Naive thymus-derived CD4-positive, alpha-beta T cell (primary cell): ENCODE measurements at regions of chr14 and their contacts with region 1.

Region 1: DNA sequence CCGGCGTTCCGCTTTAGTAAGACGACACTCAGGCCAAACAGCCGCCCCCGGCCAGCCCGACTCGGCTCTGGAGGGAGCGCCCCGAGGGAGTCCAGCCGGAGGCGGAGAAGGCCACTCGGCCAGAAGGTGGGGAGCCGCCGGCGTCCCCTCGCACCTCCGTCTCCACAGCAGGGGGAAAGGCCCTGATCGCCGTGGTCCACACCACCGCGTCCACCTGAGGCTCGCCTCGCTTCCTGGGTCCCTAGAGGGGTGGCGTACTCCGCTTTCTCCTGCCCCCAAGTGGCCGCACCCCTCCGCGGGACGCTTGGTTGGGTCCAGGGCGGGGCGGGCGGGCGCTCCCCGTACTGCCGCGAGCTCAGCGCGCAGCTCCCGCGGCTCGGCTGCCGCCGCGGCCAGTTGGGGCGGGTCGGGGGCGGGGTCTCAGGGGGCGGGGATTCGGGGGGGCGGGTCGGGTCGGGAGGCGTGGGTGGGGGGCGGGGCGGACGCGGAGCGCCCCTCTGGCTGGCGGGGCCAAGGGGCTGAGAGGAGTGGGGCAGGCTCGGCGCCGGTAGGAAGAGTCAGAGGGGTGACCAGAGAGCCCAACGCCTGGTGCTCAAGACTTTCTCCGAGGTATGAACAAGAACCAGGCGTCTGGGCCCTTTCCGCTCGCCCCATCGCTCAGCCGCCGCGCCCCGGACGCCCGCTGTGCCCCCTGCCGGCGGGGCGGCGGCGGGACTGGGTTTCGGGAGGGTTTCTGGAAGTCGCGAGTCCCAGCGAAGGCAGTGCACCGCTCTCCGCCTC is at the start of gene FRMD6:
- DNase-seq: peak; percentile 75 to 90 (median 83)
- ATAC-seq: peak; percentile 90
- H3K4me3 ChIP-seq: peak within 1 kb of the TSS; percentile 76
- H3K4me3 Mint-ChIP-seq: peak within 1 kb of the TSS; percentile 77 to 89 (median 84)
- H3K27ac ChIP-seq: peak within 1 kb of the TSS; percentile 78
- H3K27ac Mint-ChIP-seq: peak within 1 kb of the TSS in 8 of 9 donors; percentile 20 to 83 (median 73)
- H3K4me1 ChIP-seq: peaks cover 6 to 18% of the 10 kb centered on the region in 2 donors
- H3K4me1 Mint-ChIP-seq: peaks cover 12 to 29% (median 18%) of the 10 kb centered on the region in 7 donors
- H3K27me3 ChIP-seq: peaks cover 0 to 12% of the 10 kb centered on the region in 2 donors
- H3K27me3 Mint-ChIP-seq: peaks cover 9 to 31% (median 19%) of the 10 kb centered on the region in 5 donors
- total RNA-seq, gene FRMD6: 0.93 to 4.8 (median 3.9) TPM

Region 2: DNA sequence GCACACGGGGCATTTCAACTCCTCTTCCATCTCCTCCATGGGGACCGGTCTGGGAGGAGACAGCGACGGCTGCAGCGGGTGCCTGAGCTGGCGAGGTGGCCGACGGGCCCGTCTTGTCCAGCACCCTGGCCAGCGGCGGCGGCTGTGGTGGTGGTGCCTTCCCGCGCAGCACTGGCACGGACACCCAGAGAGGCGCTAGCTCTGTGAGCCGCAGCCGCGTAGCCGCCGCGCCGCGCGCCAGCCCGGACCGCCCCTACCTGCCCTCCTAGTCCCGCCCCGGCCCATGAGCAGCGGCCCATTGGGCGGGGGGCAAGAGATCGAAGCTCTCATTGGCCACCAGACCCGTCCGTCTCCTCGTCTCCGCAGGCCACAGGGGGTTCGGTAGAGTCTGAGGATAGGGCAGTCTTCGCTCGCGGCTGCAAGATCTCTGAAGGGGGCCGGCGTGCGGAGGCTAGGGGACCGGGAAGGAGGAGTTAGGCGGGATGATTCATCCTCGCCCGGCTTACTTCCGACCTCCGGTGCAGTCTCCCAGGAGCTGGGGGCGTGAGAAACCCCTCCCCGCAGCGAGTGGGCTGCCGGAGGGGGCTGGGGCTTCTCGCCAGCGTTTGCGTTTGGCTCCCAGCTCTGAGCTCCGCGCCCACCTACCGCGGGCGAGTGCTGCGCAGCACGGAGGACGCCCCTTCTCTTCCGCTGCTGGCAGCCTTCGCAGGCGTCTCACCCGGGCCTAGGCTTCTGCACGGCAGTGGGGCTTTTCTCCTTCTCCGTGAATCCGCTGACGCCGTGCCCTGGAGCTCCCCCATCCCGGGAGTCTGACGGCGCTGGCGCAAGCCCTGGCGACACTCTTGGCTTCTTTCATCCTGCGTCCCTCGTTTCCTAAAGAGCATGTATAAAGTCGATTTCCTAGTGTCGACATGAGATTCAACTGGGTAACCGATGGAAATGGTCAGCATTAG is 556.4 kb before region 1 on chr14 and contains the start of gene TRIM9:
- CTCF ChIA-PET with region 1: no interaction called
- POLR2A ChIA-PET with region 1: no interaction called
- intact Hi-C with region 1: loop called (anchors 1 kb)
- DNase-seq: peak; percentile 77 to 93 (median 91)
- ATAC-seq: peak; percentile 96
- H3K4me3 ChIP-seq: peak within 1 kb of the TSS; percentile 83
- H3K4me3 Mint-ChIP-seq: peak within 1 kb of the TSS; percentile 89 to 98 (median 95)
- H3K27ac ChIP-seq: peak within 1 kb of the TSS; percentile 58
- H3K27ac Mint-ChIP-seq: peak within 1 kb of the TSS; percentile 9 to 93 (median 87)
- H3K4me1 ChIP-seq: peaks cover 3 to 8% of the 10 kb centered on the region in 2 donors
- H3K4me1 Mint-ChIP-seq: peaks cover 4 to 18% (median 9%) of the 10 kb centered on the region in 7 donors
- H3K27me3 ChIP-seq: peaks cover 0 to 3% of the 10 kb centered on the region in 2 donors
- H3K27me3 Mint-ChIP-seq: peaks cover 12 to 70% (median 17%) of the 10 kb centered on the region in 5 donors
- total RNA-seq, gene TRIM9: 0.27 to 1.7 (median 0.39) TPM

Region 3: GRCh38 chr14:51369814-51370213 is 281.8 kb before region 1 on chr14:
- CTCF ChIA-PET with region 1: no interaction called
- POLR2A ChIA-PET with region 1: no interaction called
- intact Hi-C with region 1: loop called in 1 of 2 experiments (anchors 5 kb)
- DNase-seq: peak in 4 of 9 donors; percentile 1 to 14 (median 8)
- ATAC-seq: no peak
- H3K4me3 ChIP-seq: no peak overlapping the region
- H3K4me3 Mint-ChIP-seq: no peak overlapping the region
- H3K27ac ChIP-seq: no peak overlapping the region
- H3K27ac Mint-ChIP-seq: no peak overlapping the region
- H3K4me1 ChIP-seq: no peaks in the 10 kb centered on the region
- H3K4me1 Mint-ChIP-seq: no peaks in the 10 kb centered on the region
- H3K27me3 ChIP-seq: no peaks in the 10 kb centered on the region
- H3K27me3 Mint-ChIP-seq: peaks cover 4 to 14% (median 9%) of the 10 kb centered on the region in 5 donors

Region 4: GRCh38 chr14:51395361-51395849 is 256.2 kb before region 1 on chr14:
- CTCF ChIA-PET with region 1: no interaction called
- POLR2A ChIA-PET with region 1: no interaction called
- intact Hi-C with region 1: no loop called
- DNase-seq: no peak
- ATAC-seq: no peak
- H3K4me3 ChIP-seq: no peak overlapping the region
- H3K4me3 Mint-ChIP-seq: no peak overlapping the region
- H3K27ac ChIP-seq: no peak overlapping the region
- H3K27ac Mint-ChIP-seq: no peak overlapping the region
- H3K4me1 ChIP-seq: no peaks in the 10 kb centered on the region
- H3K4me1 Mint-ChIP-seq: no peaks in the 10 kb centered on the region
- H3K27me3 ChIP-seq: no peaks in the 10 kb centered on the region
- H3K27me3 Mint-ChIP-seq: peaks cover 9 to 24% (median 14%) of the 10 kb centered on the region in 5 donors

Region 5: DNA sequence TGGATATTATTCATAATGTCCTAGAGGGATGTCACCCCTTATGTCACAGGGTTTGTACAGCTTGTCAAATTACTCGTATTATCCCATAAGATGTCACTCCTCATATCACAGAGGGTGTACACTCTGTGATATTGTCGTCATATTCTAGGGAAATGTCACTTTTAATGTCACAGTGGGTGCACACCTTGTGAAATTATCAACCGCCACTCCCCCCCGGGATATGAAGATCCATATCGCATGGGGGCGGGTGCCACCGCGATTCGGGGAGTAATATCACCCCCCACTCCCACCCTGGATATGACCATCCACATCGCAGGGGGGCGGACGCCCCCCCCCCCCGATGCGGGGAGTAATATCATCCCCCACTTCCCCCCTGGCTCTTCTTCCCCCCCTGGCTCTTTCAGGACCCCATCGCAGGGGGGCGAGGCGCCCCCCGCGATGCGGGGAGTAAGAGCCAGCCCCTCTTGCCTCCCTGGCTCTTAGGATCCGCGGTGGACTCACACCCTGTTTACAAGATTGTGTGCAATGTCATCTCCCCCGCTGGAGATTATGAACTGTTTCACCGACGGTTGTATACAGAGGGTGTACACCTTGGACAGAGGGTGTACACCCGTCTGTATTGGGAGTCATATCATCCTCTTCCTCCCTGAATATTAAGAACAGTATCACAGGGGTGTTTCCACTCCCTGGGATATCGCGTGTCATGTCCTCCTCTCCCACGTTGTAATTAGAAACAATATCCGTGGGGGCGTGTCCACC is 93.0 kb after region 1 on chr14:
- CTCF ChIA-PET with region 1: no interaction called
- POLR2A ChIA-PET with region 1: no interaction called
- intact Hi-C with region 1: loop called in 1 of 2 experiments (anchors 5 kb)
- DNase-seq: no peak
- ATAC-seq: no peak
- H3K4me3 ChIP-seq: no peak overlapping the region
- H3K4me3 Mint-ChIP-seq: no peak overlapping the region
- H3K27ac ChIP-seq: no peak overlapping the region
- H3K27ac Mint-ChIP-seq: no peak overlapping the region
- H3K4me1 ChIP-seq: no peaks in the 10 kb centered on the region
- H3K4me1 Mint-ChIP-seq: peaks cover 0 to 1% (median 0%) of the 10 kb centered on the region in 7 donors
- H3K27me3 ChIP-seq: no peaks in the 10 kb centered on the region
- H3K27me3 Mint-ChIP-seq: peaks cover 0 to 6% (median 3%) of the 10 kb centered on the region in 5 donors

Region 6: GRCh38 chr14:51860164-51860824 is 208.7 kb after region 1 on chr14 and contains the start of gene GNG2:
- CTCF ChIA-PET with region 1: no interaction called
- POLR2A ChIA-PET with region 1: no interaction called
- intact Hi-C with region 1: loop called in 1 of 2 experiments (anchors 2 kb)
- DNase-seq: peak; percentile 62 to 87 (median 84)
- ATAC-seq: peak; percentile 98
- H3K4me3 ChIP-seq: peak within 1 kb of the TSS; percentile 65
- H3K4me3 Mint-ChIP-seq: peak within 1 kb of the TSS; percentile 89 to 99 (median 96)
- H3K27ac ChIP-seq: peak within 1 kb of the TSS; percentile 90
- H3K27ac Mint-ChIP-seq: peak within 1 kb of the TSS; percentile 88 to 99 (median 96)
- H3K4me1 ChIP-seq: peaks cover 28 to 45% of the 10 kb centered on the region in 2 donors
- H3K4me1 Mint-ChIP-seq: peaks cover 43 to 78% (median 65%) of the 10 kb centered on the region in 7 donors
- H3K27me3 ChIP-seq: no peaks in the 10 kb centered on the region
- H3K27me3 Mint-ChIP-seq: no peaks in the 10 kb centered on the region
- total RNA-seq, gene GNG2: 62.1 to 199 (median 106) TPM

Region 7: GRCh38 chr14:52706724-52707706 is 1055.4 kb after region 1 on chr14 and contains the start of gene PSMC6:
- CTCF ChIA-PET with region 1: no interaction called
- POLR2A ChIA-PET with region 1: no interaction called
- intact Hi-C with region 1: loop called in 1 of 2 experiments (anchors 5 kb)
- DNase-seq: peak; percentile 82 to 93 (median 90)
- ATAC-seq: peak; percentile 99
- H3K4me3 ChIP-seq: peak within 1 kb of the TSS; percentile 74
- H3K4me3 Mint-ChIP-seq: peak within 1 kb of the TSS; percentile 96 to 100 (median 98)
- H3K27ac ChIP-seq: peak within 1 kb of the TSS; percentile 82
- H3K27ac Mint-ChIP-seq: peak within 1 kb of the TSS; percentile 95 to 98 (median 97)
- H3K4me1 ChIP-seq: peaks cover 11 to 16% of the 10 kb centered on the region in 2 donors
- H3K4me1 Mint-ChIP-seq: peaks cover 28 to 60% (median 52%) of the 10 kb centered on the region in 7 donors
- H3K27me3 ChIP-seq: no peaks in the 10 kb centered on the region
- H3K27me3 Mint-ChIP-seq: no peaks in the 10 kb centered on the region
- total RNA-seq, gene PSMC6: 84.8 to 131 (median 95.9) TPM